PC-9 (cell line): ENCODE measurements at regions of chr7 and their contacts with region 1.

Region 1: GRCh38 chr7:34928049-34928448 is 109.2 kb downstream of the DPY19L1 start:
- DNase-seq: peak in 1 of 2 experiments; percentile 29
- H3K4me3 ChIP-seq: no peak overlapping the region
- H3K27ac ChIP-seq: no peak overlapping the region
- H3K4me1 ChIP-seq: no peaks in the 10 kb centered on the region
- H3K27me3 ChIP-seq: no peaks in the 10 kb centered on the region
- CTCF ChIP-seq: peak; percentile 71

Region 2: DNA sequence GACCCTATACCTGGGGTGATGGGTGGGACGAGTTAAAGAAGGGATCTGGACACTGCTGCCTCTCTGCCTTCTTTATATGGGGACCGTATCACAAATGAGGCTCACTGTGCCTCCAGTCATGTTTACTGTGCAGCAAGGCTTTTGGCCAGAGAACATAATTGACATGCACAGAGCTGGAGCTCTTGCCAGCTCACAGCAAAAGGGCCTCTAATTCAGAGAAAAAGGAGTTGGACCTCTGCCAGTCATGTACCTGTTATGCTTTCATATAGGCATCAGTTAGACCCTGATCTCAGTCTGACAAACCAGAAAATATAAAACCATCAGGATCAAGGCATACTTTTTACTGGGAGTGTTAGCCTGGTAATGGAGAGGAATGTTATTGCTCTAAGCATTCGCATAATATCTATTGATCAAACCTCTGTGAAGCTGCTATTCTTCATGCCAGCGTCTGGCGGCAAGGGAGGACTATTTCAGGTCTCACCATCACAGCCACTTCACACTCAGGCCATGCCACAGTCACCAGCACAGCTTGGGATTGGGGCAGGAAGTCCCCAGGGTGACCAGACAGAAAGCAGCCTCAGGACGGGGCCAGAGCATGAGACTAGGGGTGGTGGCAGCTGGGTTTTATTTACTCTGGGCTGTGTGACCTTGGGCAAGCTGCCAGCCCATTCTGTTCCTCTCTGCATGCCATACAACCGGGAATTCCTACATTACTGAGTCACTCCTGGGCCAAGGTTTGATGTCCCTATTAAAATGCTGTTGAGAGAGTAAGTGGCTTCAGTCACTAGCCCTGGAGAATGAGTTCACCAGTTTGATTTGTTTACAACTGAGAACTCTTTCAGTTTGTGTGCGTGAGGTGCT is 180.0 kb before region 1 on chr7:
- CTCF ChIA-PET with region 1: no interaction called
- POLR2A ChIA-PET with region 1: no interaction called
- intact Hi-C with region 1: loop called (anchors 5 kb)
- DNase-seq: peak; percentile 95 to 99
- H3K4me3 ChIP-seq: peak overlapping the region; percentile 4; the same call in 1 of the 2 replicates
- H3K27ac ChIP-seq: peak overlapping the region; percentile 63
- H3K4me1 ChIP-seq: peaks cover 29% of the 10 kb centered on the region
- H3K27me3 ChIP-seq: no peaks in the 10 kb centered on the region
- CTCF ChIP-seq: peak; percentile 44; the same call in 1 of the 2 replicates

Region 3: GRCh38 chr7:34939175-34939574 is 11.1 kb after region 1 on chr7:
- CTCF ChIA-PET with region 1: no interaction called
- POLR2A ChIA-PET with region 1: interaction called, 11 read pairs
- intact Hi-C with region 1: no loop called
- DNase-seq: no peak
- H3K4me3 ChIP-seq: no peak overlapping the region
- H3K27ac ChIP-seq: no peak overlapping the region
- H3K4me1 ChIP-seq: no peaks in the 10 kb centered on the region
- H3K27me3 ChIP-seq: no peaks in the 10 kb centered on the region
- CTCF ChIP-seq: no peak